Esophagus squamous epithelium (tissue), 5 donors: ENCODE measurements at regions of chr12 and their contacts with region 1.

Region 1: GRCh38 chr12:34126239-34126641 is 103.9 kb downstream of the ALG10 start:
- DNase-seq: no peak
- H3K4me3 ChIP-seq: peak overlapping the region in 1 of 4 donors; percentile 15
- H3K27ac ChIP-seq: no peak overlapping the region
- H3K4me1 ChIP-seq: no peaks in the 10 kb centered on the region
- H3K27me3 ChIP-seq: peaks cover 0 to 7% (median 0%) of the 10 kb centered on the region in 4 donors
- CTCF ChIP-seq: no peak
- POLR2A ChIP-seq: no peak

Region 2: GRCh38 chr12:34218165-34219045 is 92.2 kb after region 1 on chr12:
- intact Hi-C with region 1: loop called (anchors 10 kb)
- DNase-seq: no peak
- H3K4me3 ChIP-seq: peak overlapping the region; percentile 9 to 43 (median 34)
- H3K27ac ChIP-seq: no peak overlapping the region
- H3K4me1 ChIP-seq: peaks cover 0 to 12% (median 0%) of the 10 kb centered on the region in 3 donors
- H3K27me3 ChIP-seq: peaks cover 0 to 14% (median 0%) of the 10 kb centered on the region in 4 donors
- CTCF ChIP-seq: peak; percentile 47 to 84 (median 78)
- POLR2A ChIP-seq: no peak